ENCODE measurements at regions of chr5 and their contacts with region 1.

Region 1: GRCh38 chr5:134184155-134185135 is 7.7 kb upstream of the SKP1 start:
- DNase-seq: peak; percentile 76
- H3K4me3 ChIP-seq: no peak overlapping the region
- H3K27ac ChIP-seq: no peak overlapping the region
- H3K4me1 ChIP-seq: no peaks in the 10 kb centered on the region
- H3K27me3 ChIP-seq: no peaks in the 10 kb centered on the region
- CTCF ChIP-seq: peak; percentile 91

Region 2: GRCh38 chr5:134225618-134226440 is 41.4 kb after region 1 on chr5 and contains the start of gene PPP2CA:
- intact Hi-C with region 1: loop called (anchors 5 kb)
- DNase-seq: peak; percentile 99
- H3K4me3 ChIP-seq: peak within 1 kb of the TSS; percentile 80
- H3K27ac ChIP-seq: peak within 1 kb of the TSS; percentile 100
- H3K4me1 ChIP-seq: peaks cover 20% of the 10 kb centered on the region
- H3K27me3 ChIP-seq: no peaks in the 10 kb centered on the region
- CTCF ChIP-seq: no peak
- total RNA-seq, gene PPP2CA: 147 to 150 TPM

Region 3: GRCh38 chr5:134289509-134290113 is 105.2 kb after region 1 on chr5:
- intact Hi-C with region 1: loop called (anchors 1 kb)
- DNase-seq: peak; percentile 58
- H3K4me3 ChIP-seq: no peak overlapping the region
- H3K27ac ChIP-seq: no peak overlapping the region
- H3K4me1 ChIP-seq: no peaks in the 10 kb centered on the region
- H3K27me3 ChIP-seq: no peaks in the 10 kb centered on the region
- CTCF ChIP-seq: peak; percentile 62

Region 4: GRCh38 chr5:134586866-134587524 is 402.6 kb after region 1 on chr5:
- intact Hi-C with region 1: loop called (anchors 10 kb)
- DNase-seq: peak; percentile 88
- H3K4me3 ChIP-seq: no peak overlapping the region
- H3K27ac ChIP-seq: no peak overlapping the region
- H3K4me1 ChIP-seq: no peaks in the 10 kb centered on the region
- H3K27me3 ChIP-seq: no peaks in the 10 kb centered on the region
- CTCF ChIP-seq: peak; percentile 84